ENCODE measurements at regions of chr10 and their contacts with region 1.

Region 1: GRCh38 chr10:22704471-22704911 is 9.9 kb downstream of the PIP4K2A start:
- DNase-seq: no peak
- ATAC-seq: no peak
- H3K4me3 ChIP-seq: no peak overlapping the region
- H3K4me3 Mint-ChIP-seq: peak overlapping the region; percentile 63
- H3K27ac ChIP-seq: no peak overlapping the region
- H3K27ac Mint-ChIP-seq: peak overlapping the region; percentile 83
- H3K4me1 ChIP-seq: peaks cover 78% of the 10 kb centered on the region
- H3K4me1 Mint-ChIP-seq: peaks cover 99% of the 10 kb centered on the region
- H3K27me3 ChIP-seq: no peaks in the 10 kb centered on the region
- H3K27me3 Mint-ChIP-seq: no peaks in the 10 kb centered on the region
- CTCF ChIP-seq: no peak

Region 2: DNA sequence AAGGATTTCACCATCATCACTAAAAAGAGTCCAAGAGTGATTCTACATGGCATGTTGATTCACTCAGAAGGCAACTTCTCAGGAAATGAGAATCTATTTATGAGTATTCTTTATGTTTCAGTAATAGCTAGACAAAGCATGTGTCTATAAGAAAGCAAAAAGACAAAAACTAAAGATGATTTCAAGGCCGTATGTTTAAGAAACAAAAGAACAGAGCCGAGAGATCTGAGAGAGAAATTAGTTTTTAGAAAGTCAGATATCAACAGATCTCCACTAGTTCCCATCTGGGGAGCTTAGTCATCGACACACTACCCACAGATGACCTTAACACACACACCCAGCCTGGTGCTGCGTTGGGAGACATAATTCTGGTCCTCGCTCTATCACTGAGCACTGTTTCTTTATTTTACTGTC is 11.1 kb before region 1 on chr10:
- CTCF ChIA-PET with region 1: interaction called, 4 read pairs
- POLR2A ChIA-PET with region 1: interaction called, 6 read pairs
- intact Hi-C with region 1: loop called in 1 of 2 experiments (anchors 1 kb)
- DNase-seq: peak in 3 of 14 experiments; percentile 45 to 55 (median 51)
- ATAC-seq: peak; percentile 49
- H3K4me3 ChIP-seq: no peak overlapping the region
- H3K4me3 Mint-ChIP-seq: peak overlapping the region; percentile 54
- H3K27ac ChIP-seq: peak overlapping the region; percentile 8 to 16
- H3K27ac Mint-ChIP-seq: peak overlapping the region; percentile 99
- H3K4me1 ChIP-seq: peaks cover 53% of the 10 kb centered on the region
- H3K4me1 Mint-ChIP-seq: peaks cover 93% of the 10 kb centered on the region
- H3K27me3 ChIP-seq: no peaks in the 10 kb centered on the region
- H3K27me3 Mint-ChIP-seq: no peaks in the 10 kb centered on the region
- CTCF ChIP-seq: no peak